ENCODE measurements at regions of chr1 and their contacts with region 1.

Region 1: DNA sequence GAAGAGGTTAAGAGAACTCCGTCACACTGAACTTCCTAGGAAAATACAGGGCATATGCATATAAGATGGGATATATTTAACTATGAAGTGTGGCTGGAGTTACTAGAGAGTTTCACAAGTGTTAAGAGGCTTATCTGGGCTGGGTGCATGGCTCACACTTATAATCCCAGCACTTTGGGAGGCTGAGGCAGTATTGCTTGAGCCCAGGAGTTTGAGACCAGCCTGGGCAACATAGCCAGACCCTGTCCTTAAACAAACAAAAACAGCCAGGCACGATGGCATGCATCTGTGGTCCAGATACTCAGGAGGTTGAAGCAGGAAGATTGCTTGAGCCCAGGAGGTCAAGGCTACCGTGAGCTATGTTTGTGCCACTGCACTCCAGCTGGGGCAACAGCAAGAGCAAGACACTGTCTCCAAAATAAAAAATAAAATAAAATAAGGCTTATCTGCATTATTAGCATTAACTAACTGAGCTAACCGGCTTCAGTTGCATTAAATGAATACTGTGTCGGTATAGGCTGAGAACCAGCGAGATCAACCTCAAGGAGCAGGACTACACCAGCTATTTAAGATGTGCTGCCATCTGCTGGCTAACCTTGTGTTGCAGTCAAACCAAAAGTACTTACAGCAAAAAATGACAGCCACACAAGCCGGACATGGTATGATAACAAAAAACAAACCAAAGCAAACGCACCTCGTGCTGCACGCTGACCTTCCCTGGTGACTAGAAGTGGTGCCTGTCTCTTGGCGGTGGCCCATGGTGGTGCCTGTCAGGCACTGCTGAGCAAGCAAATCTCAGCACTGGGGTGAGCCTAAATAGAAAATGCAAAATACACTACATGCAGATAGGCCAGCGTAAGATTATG is 19.7 kb upstream of the RBBP5 start:
- DNase-seq: peak; percentile 37 to 75 (median 64)
- ATAC-seq: peak; percentile 94
- H3K4me3 ChIP-seq: no peak overlapping the region
- H3K4me3 Mint-ChIP-seq: peak overlapping the region in 4 of 10 donors; percentile 20 to 52 (median 33)
- H3K27ac ChIP-seq: no peak overlapping the region
- H3K27ac Mint-ChIP-seq: peak overlapping the region in 5 of 9 donors; percentile 9 to 51 (median 38)
- H3K4me1 ChIP-seq: no peaks in the 10 kb centered on the region
- H3K4me1 Mint-ChIP-seq: peaks cover 2 to 11% (median 8%) of the 10 kb centered on the region in 7 donors
- H3K27me3 ChIP-seq: no peaks in the 10 kb centered on the region
- H3K27me3 Mint-ChIP-seq: no peaks in the 10 kb centered on the region

Region 2: DNA sequence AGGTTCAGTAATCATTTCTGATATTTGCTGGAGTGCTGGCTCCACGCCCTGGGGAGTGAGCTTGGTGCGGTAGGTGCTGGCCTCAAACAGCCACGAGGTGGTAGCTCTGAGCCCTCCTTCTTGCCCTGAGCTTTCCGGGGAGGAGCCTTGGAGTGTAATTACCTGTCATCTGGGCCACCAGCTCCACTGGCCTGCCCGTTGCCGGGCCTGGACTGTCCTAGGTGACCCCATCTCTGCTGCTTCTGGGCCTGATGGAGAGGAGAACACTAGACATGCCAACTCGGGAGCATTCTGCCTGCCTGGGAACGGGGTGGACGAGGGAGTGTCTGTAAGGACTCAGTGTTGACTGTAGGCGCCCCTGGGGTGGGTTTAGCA is 1974.9 kb before region 1 on chr1:
- CTCF ChIA-PET with region 1: no interaction called
- POLR2A ChIA-PET with region 1: no interaction called
- intact Hi-C with region 1: no loop called
- DNase-seq: no peak
- ATAC-seq: no peak
- H3K4me3 ChIP-seq: no peak overlapping the region
- H3K4me3 Mint-ChIP-seq: no peak overlapping the region
- H3K27ac ChIP-seq: no peak overlapping the region
- H3K27ac Mint-ChIP-seq: no peak overlapping the region
- H3K4me1 ChIP-seq: no peaks in the 10 kb centered on the region
- H3K4me1 Mint-ChIP-seq: peaks cover 0 to 4% (median 0%) of the 10 kb centered on the region in 7 donors
- H3K27me3 ChIP-seq: no peaks in the 10 kb centered on the region
- H3K27me3 Mint-ChIP-seq: peaks cover 0 to 32% (median 10%) of the 10 kb centered on the region in 5 donors

Region 3: DNA sequence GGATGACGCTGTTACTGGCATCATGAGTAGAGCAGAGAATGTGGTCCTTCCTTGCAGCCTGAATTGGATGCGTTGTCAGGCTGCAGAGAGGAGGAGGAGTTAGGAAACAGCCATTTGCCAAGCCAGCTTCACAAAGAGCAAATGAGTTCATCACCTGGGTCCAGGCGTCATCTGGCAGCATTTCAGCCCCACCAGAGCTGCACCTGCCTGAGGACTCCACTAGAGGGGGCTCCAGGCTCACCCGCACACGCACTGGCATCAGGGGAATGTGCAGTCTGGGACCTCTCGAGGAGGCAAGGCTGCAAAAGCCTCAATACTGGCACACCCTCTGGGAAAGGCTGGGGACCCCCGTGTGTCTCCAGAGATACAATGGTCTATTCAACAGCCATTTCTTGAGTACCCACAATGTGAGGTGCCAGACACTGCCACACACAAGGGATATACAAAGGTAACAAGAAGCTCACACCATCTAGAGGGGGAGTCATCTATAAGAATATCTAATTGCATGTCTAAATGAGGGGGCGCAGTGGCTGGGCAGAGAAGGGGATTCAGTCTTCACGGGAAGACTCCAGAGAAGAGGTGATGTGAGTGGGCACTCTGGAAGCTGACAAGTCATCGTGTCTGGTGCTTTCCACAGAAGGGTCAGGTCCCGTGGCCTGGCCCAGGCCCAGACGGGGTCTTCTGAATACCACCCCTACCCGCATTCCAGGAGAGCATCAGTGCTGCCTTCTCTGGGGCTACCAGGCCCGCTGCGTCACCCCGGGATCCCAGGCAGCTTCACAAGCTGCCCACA is 152.0 kb before region 1 on chr1:
- CTCF ChIA-PET with region 1: interaction called, 5 read pairs
- POLR2A ChIA-PET with region 1: no interaction called
- intact Hi-C with region 1: loop called (anchors 1 kb)
- DNase-seq: peak; percentile 25 to 57 (median 44)
- ATAC-seq: peak; percentile 83
- H3K4me3 ChIP-seq: no peak overlapping the region
- H3K4me3 Mint-ChIP-seq: no peak overlapping the region
- H3K27ac ChIP-seq: no peak overlapping the region
- H3K27ac Mint-ChIP-seq: peak overlapping the region in 1 of 9 donors; percentile 24
- H3K4me1 ChIP-seq: no peaks in the 10 kb centered on the region
- H3K4me1 Mint-ChIP-seq: peaks cover 10 to 22% (median 16%) of the 10 kb centered on the region in 7 donors
- H3K27me3 ChIP-seq: no peaks in the 10 kb centered on the region
- H3K27me3 Mint-ChIP-seq: peaks cover 0 to 8% (median 4%) of the 10 kb centered on the region in 5 donors

Region 4: GRCh38 chr1:205108464-205108863 is 33.0 kb before region 1 on chr1:
- CTCF ChIA-PET with region 1: no interaction called
- POLR2A ChIA-PET with region 1: no interaction called
- intact Hi-C with region 1: loop called in 1 of 2 experiments (anchors 5 kb)
- DNase-seq: no peak
- ATAC-seq: no peak
- H3K4me3 ChIP-seq: no peak overlapping the region
- H3K4me3 Mint-ChIP-seq: no peak overlapping the region
- H3K27ac ChIP-seq: no peak overlapping the region
- H3K27ac Mint-ChIP-seq: peak overlapping the region in 1 of 9 donors; percentile 78
- H3K4me1 ChIP-seq: no peaks in the 10 kb centered on the region
- H3K4me1 Mint-ChIP-seq: peaks cover 2 to 35% (median 25%) of the 10 kb centered on the region in 7 donors
- H3K27me3 ChIP-seq: no peaks in the 10 kb centered on the region
- H3K27me3 Mint-ChIP-seq: no peaks in the 10 kb centered on the region

Region 5: GRCh38 chr1:205121660-205122488 is 19.6 kb before region 1 on chr1 and contains the start of gene RBBP5:
- CTCF ChIA-PET with region 1: interaction called, 28 read pairs
- POLR2A ChIA-PET with region 1: interaction called, 9 read pairs
- intact Hi-C with region 1: loop called (anchors 1 kb)
- DNase-seq: peak; percentile 87 to 97 (median 93)
- ATAC-seq: peak; percentile 98
- H3K4me3 ChIP-seq: peak within 1 kb of the TSS; percentile 89
- H3K4me3 Mint-ChIP-seq: peak within 1 kb of the TSS; percentile 89 to 99 (median 96)
- H3K27ac ChIP-seq: peak within 1 kb of the TSS; percentile 86
- H3K27ac Mint-ChIP-seq: peak within 1 kb of the TSS; percentile 98 to 100 (median 99)
- H3K4me1 ChIP-seq: peaks cover 18 to 24% of the 10 kb centered on the region in 2 donors
- H3K4me1 Mint-ChIP-seq: peaks cover 30 to 56% (median 51%) of the 10 kb centered on the region in 7 donors
- H3K27me3 ChIP-seq: no peaks in the 10 kb centered on the region
- H3K27me3 Mint-ChIP-seq: no peaks in the 10 kb centered on the region
- total RNA-seq, gene RBBP5: 11.0 to 31.5 (median 21.0) TPM

Region 6: GRCh38 chr1:205267306-205267902 is 125.9 kb after region 1 on chr1:
- CTCF ChIA-PET with region 1: no interaction called
- POLR2A ChIA-PET with region 1: no interaction called
- intact Hi-C with region 1: no loop called
- DNase-seq: no peak
- ATAC-seq: peak; percentile 32
- H3K4me3 ChIP-seq: no peak overlapping the region
- H3K4me3 Mint-ChIP-seq: no peak overlapping the region
- H3K27ac ChIP-seq: no peak overlapping the region
- H3K27ac Mint-ChIP-seq: peak overlapping the region in 1 of 9 donors; percentile 72
- H3K4me1 ChIP-seq: no peaks in the 10 kb centered on the region
- H3K4me1 Mint-ChIP-seq: peaks cover 0 to 18% (median 6%) of the 10 kb centered on the region in 7 donors
- H3K27me3 ChIP-seq: no peaks in the 10 kb centered on the region
- H3K27me3 Mint-ChIP-seq: no peaks in the 10 kb centered on the region

Measured in naive thymus-derived CD4-positive, alpha-beta T cell (primary cell).